Activated B cell treated with CpG ODN at 0.5 μM for 24 hours (primary cell): ENCODE measurements at regions of chr4 and their contacts with region 1.

Region 1: DNA sequence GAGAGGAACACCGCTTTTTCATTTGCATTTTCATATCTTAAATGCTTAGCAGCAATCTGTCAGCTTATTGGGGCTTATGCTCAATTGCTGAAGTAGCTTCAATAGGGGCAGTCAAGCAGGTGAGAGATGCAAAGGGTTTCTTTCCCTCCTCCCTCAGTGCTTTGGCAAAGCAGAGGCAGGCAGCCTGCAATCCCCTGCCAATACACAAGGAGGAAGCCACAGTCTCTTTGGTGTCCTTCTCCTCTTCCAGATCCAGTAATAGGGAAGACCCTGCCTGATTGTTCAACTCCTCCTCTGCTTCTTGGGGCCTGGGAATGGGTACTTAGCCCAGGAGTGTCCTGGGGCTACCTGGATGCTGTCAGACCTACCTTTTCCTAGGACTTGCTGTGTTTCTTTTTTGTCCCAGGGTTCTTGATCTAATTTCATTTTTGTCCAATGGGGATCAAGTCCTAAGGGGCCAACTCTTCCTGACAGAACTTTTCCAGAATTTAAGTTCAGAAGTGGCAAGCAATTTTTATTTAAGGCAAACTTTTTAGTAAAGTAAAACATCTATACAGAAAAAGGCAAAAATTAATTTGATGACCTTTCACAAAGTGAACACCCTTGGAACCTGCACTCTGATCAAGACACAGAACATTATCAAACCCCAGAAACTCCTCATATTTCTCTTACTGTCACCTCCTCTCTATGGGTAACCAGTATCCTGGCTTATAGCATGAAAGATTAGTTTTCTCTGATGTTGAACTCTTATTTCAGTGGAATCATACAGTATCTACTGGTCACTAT is 260.3 kb downstream of the PPP3CA start:
- DNase-seq: no peak
- ATAC-seq: no peak
- H3K4me3 Mint-ChIP-seq: no peak overlapping the region
- H3K27ac Mint-ChIP-seq: peak overlapping the region; percentile 76
- H3K4me1 Mint-ChIP-seq: peaks cover 60% of the 10 kb centered on the region
- H3K27me3 Mint-ChIP-seq: no peaks in the 10 kb centered on the region
- CTCF ChIP-seq: no peak

Region 2: GRCh38 chr4:101020956-101021355 is 66.0 kb before region 1 on chr4:
- CTCF ChIA-PET with region 1: no interaction called
- POLR2A ChIA-PET with region 1: interaction called, 3 read pairs
- intact Hi-C with region 1: loop called (anchors 2 kb)
- DNase-seq: no peak
- ATAC-seq: peak; percentile 72
- H3K4me3 Mint-ChIP-seq: no peak overlapping the region
- H3K27ac Mint-ChIP-seq: peak overlapping the region; percentile 18
- H3K4me1 Mint-ChIP-seq: peaks cover 36% of the 10 kb centered on the region
- H3K27me3 Mint-ChIP-seq: no peaks in the 10 kb centered on the region
- CTCF ChIP-seq: no peak

Region 3: DNA sequence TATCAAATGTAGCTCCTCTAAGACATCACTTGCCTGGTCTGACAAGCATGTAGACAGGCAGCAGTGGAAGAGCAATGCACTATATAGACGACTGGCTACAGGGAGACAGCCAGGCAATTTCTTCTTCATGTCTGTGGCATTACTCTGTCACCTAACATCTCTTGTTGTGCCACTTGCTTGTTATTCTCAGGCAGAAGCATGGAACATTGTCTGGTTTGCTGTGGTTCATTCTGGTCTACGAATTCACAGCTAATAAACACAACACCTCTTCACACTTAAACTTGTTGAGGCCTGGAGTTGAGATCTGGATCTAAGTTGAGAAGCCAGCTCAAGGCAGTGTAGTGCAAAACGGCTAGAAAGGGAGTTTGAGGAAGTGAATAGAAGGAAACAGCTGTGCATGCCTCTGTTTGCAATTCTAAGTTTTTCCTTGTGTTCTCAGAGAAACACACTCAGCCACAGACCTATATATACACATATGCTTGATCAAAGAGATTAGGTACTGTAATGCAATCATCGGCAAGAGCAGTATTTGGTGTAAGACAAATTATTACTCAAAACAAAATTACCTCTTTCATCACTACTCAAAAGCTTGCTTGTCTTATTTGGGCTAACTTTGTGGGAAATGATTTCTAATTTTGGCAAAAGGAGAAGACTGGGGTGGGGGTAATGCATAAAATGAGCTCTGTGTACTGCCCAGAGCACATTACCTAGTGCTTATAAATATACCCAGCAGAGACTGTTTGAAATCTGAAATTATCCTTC is 16.6 kb after region 1 on chr4:
- CTCF ChIA-PET with region 1: interaction called, 3 read pairs
- POLR2A ChIA-PET with region 1: interaction called, 7 read pairs
- intact Hi-C with region 1: loop called (anchors 1 kb)
- DNase-seq: no peak
- ATAC-seq: peak; percentile 70
- H3K4me3 Mint-ChIP-seq: peak overlapping the region; percentile 39
- H3K27ac Mint-ChIP-seq: peak overlapping the region; percentile 85
- H3K4me1 Mint-ChIP-seq: peaks cover 47% of the 10 kb centered on the region
- H3K27me3 Mint-ChIP-seq: no peaks in the 10 kb centered on the region
- CTCF ChIP-seq: no peak

Region 4: GRCh38 chr4:101127176-101127790 is 40.3 kb after region 1 on chr4:
- CTCF ChIA-PET with region 1: no interaction called
- POLR2A ChIA-PET with region 1: no interaction called
- intact Hi-C with region 1: loop called (anchors 1 kb)
- DNase-seq: no peak
- ATAC-seq: peak; percentile 84
- H3K4me3 Mint-ChIP-seq: peak overlapping the region; percentile 25
- H3K27ac Mint-ChIP-seq: peak overlapping the region; percentile 46
- H3K4me1 Mint-ChIP-seq: peaks cover 81% of the 10 kb centered on the region
- H3K27me3 Mint-ChIP-seq: no peaks in the 10 kb centered on the region
- CTCF ChIP-seq: no peak

Region 5: GRCh38 chr4:101156619-101157310 is 69.8 kb after region 1 on chr4:
- CTCF ChIA-PET with region 1: no interaction called
- POLR2A ChIA-PET with region 1: no interaction called
- intact Hi-C with region 1: loop called (anchors 2 kb)
- DNase-seq: no peak
- ATAC-seq: no peak
- H3K4me3 Mint-ChIP-seq: no peak overlapping the region
- H3K27ac Mint-ChIP-seq: peak overlapping the region; percentile 50
- H3K4me1 Mint-ChIP-seq: peaks cover 62% of the 10 kb centered on the region
- H3K27me3 Mint-ChIP-seq: no peaks in the 10 kb centered on the region
- CTCF ChIP-seq: no peak

Region 6: DNA sequence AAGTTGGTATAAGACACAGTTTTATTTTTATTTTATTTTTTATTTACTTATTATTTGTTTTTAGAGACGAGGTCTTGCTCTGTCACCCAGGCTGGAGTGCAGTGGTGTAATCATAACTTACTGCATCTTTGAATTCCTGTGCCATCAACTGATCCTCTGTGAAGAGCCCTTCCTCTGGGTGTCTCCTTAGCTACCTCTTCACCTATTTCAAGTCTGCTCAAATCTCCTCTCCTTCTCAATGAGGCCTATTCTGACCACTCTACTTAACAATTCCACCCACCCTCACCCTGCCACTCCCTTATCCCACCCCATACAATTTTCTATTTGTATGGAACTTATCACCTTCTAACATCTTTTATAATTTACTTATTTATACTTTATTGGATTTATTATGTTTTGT is 76.9 kb after region 1 on chr4:
- CTCF ChIA-PET with region 1: no interaction called
- POLR2A ChIA-PET with region 1: no interaction called
- intact Hi-C with region 1: loop called (anchors 1 kb)
- DNase-seq: no peak
- ATAC-seq: no peak
- H3K4me3 Mint-ChIP-seq: no peak overlapping the region
- H3K27ac Mint-ChIP-seq: peak overlapping the region; percentile 57
- H3K4me1 Mint-ChIP-seq: peaks cover 26% of the 10 kb centered on the region
- H3K27me3 Mint-ChIP-seq: no peaks in the 10 kb centered on the region
- CTCF ChIP-seq: no peak